ENCODE measurements at regions of chr7 and their contacts with region 1.

Region 1: DNA sequence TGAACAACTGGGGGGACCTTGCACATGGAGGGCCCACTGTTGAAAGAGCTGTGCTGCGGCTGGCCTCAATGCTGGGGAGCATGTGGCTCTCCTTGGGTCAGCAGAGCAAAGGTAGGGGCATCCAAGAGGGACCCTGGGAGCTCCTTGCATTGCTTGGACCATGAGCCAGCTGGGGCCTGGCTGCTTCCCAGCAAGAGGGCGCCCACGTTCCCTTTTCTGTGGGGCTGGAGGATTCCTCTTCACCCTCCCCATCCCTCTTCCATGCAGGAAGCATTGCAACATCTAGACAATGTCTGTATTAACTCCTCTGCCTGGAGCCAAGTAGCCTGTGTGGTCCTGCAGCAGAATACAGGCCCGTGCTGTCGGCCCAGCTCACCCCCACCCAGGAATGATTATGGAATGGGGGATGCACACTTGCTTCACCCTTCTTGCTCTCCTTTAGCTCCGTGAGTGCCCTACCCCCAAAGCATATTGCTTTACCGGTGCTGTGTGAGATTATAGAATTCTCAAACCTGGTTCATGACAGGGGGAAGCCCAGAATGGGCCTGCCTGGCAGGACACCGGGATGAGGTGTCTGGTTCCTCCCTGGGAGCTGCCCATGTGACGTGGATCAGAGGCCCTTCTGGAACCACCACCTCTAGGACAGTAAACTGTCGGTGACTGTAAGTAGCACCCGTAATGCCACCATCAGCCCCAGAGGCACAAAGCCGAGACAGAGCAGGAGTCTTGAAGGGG is 61.9 kb downstream of the SYPL1 start:
- DNase-seq: peak; percentile 57
- H3K4me3 ChIP-seq: no peak overlapping the region
- H3K27ac ChIP-seq: peak overlapping the region; percentile 31
- H3K4me1 ChIP-seq: peaks cover 41% of the 10 kb centered on the region
- H3K27me3 ChIP-seq: no peaks in the 10 kb centered on the region
- CTCF ChIP-seq: peak; percentile 26 to 51

Region 2: GRCh38 chr7:106166655-106167342 is 116.6 kb after region 1 on chr7:
- CTCF ChIA-PET with region 1: no interaction called
- dilution Hi-C with region 1: loop called (anchors 5 kb)
- in situ Hi-C with region 1: no loop called
- intact Hi-C with region 1: no loop called
- DNase-seq: peak; percentile 40
- H3K4me3 ChIP-seq: no peak overlapping the region
- H3K27ac ChIP-seq: no peak overlapping the region
- H3K4me1 ChIP-seq: no peaks in the 10 kb centered on the region
- H3K27me3 ChIP-seq: no peaks in the 10 kb centered on the region
- CTCF ChIP-seq: peak; percentile 76 to 82

Region 3: DNA sequence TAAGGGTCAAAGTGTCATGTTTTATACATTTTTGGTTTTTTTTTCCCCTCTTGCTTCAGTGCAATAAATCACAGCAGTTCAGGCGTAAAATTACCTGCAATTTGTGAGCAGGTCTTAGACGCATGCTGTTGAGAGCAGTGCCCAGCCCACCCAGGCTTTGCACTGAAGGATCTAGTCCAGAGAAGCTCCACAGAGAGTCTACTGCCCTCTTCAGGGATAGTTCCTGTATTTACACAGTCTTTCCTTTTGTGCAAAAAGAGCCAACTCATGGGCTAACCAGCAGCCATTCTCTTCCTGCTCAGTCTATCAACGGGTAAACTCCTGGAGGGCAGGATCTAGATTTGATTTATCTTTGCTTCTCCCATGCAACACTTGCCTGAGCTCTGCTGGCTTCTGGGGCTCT is 316.8 kb after region 1 on chr7:
- CTCF ChIA-PET with region 1: no interaction called
- dilution Hi-C with region 1: no loop called
- in situ Hi-C with region 1: no loop called
- intact Hi-C with region 1: no loop called
- DNase-seq: no peak
- H3K4me3 ChIP-seq: no peak overlapping the region
- H3K27ac ChIP-seq: no peak overlapping the region
- H3K4me1 ChIP-seq: peaks cover 3% of the 10 kb centered on the region
- H3K27me3 ChIP-seq: no peaks in the 10 kb centered on the region
- CTCF ChIP-seq: peak; percentile 17 to 51

Measured in mammary epithelial cell (primary cell).